B cell (primary cell): ENCODE measurements at regions of chr2 and their contacts with region 1.

Region 1: DNA sequence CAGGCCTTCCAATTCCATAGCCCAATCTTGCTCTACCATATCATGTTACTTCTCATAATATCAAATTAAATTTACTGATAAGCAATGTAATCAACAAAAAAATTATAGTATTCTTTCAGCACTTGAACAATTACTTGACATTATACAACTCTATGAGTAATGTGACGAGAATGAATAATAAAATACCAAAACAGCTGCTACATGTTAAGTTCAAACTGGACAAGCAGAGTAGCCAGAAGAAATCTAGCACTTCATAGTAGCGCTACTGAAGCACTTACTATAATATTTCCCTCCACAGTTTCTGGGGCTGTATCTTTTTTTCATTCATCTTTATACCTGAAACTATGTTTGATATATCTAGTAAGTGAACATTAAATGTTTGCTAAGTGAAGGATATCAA is 14.9 kb downstream of the PPP3R1 start:
- DNase-seq: no peak
- ATAC-seq: no peak
- H3K4me3 ChIP-seq: no peak overlapping the region
- H3K4me3 Mint-ChIP-seq: no peak overlapping the region
- H3K27ac ChIP-seq: peak overlapping the region in 1 of 2 donors; percentile 67
- H3K27ac Mint-ChIP-seq: no peak overlapping the region
- H3K4me1 ChIP-seq: peaks cover 45 to 58% of the 10 kb centered on the region in 2 donors
- H3K4me1 Mint-ChIP-seq: peaks cover 83% of the 10 kb centered on the region
- H3K27me3 ChIP-seq: no peaks in the 10 kb centered on the region
- H3K27me3 Mint-ChIP-seq: no peaks in the 10 kb centered on the region
- CTCF ChIP-seq: no peak

Region 2: GRCh38 chr2:68225119-68225632 is 12.2 kb before region 1 on chr2:
- CTCF ChIA-PET with region 1: no interaction called
- POLR2A ChIA-PET with region 1: no interaction called
- intact Hi-C with region 1: loop called (anchors 2 kb)
- DNase-seq: peak; percentile 45
- ATAC-seq: no peak
- H3K4me3 ChIP-seq: no peak overlapping the region
- H3K4me3 Mint-ChIP-seq: peak overlapping the region; percentile 5
- H3K27ac ChIP-seq: peak overlapping the region in 1 of 2 donors; percentile 58
- H3K27ac Mint-ChIP-seq: no peak overlapping the region
- H3K4me1 ChIP-seq: peaks cover 13 to 48% of the 10 kb centered on the region in 2 donors
- H3K4me1 Mint-ChIP-seq: peaks cover 86% of the 10 kb centered on the region
- H3K27me3 ChIP-seq: no peaks in the 10 kb centered on the region
- H3K27me3 Mint-ChIP-seq: no peaks in the 10 kb centered on the region
- CTCF ChIP-seq: no peak

Region 3: GRCh38 chr2:68251187-68251854 is 13.9 kb after region 1 on chr2:
- CTCF ChIA-PET with region 1: interaction called, 4 read pairs
- POLR2A ChIA-PET with region 1: no interaction called
- intact Hi-C with region 1: loop called (anchors 2 kb)
- DNase-seq: peak; percentile 92
- ATAC-seq: peak; percentile 60
- H3K4me3 ChIP-seq: peak overlapping the region; percentile 76 to 97 (median 96)
- H3K4me3 Mint-ChIP-seq: peak overlapping the region; percentile 90
- H3K27ac ChIP-seq: peak overlapping the region; percentile 86 to 92
- H3K27ac Mint-ChIP-seq: peak overlapping the region; percentile 93
- H3K4me1 ChIP-seq: peaks cover 39 to 55% of the 10 kb centered on the region in 2 donors
- H3K4me1 Mint-ChIP-seq: peaks cover 36% of the 10 kb centered on the region
- H3K27me3 ChIP-seq: no peaks in the 10 kb centered on the region
- H3K27me3 Mint-ChIP-seq: no peaks in the 10 kb centered on the region
- CTCF ChIP-seq: peak; percentile 77